Sciatic nerve (tissue), 2 donors: ENCODE measurements at regions of chr9 and their contacts with region 1.

Region 1: DNA sequence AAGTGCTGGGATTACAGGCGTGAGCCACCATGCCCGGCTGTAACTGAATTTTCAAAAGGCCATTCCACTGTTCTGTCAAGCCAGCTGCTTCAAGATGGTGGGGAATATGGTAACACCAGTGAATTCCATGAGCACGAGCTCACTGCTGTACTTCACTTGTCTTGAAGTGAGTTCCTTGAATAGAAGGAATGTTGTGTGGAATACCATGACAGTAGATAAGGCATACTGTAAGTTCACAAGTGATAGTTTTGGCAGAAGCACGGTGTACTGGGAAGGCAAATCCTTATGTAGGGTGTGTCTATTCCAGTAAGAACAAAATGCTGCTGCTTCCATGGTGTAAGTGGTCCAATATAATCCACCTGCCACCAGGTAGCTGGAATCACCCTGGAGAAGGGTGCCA is 6.6 kb upstream of the PRXL2C start:
- DNase-seq: no peak
- ATAC-seq: no peak

Region 2: DNA sequence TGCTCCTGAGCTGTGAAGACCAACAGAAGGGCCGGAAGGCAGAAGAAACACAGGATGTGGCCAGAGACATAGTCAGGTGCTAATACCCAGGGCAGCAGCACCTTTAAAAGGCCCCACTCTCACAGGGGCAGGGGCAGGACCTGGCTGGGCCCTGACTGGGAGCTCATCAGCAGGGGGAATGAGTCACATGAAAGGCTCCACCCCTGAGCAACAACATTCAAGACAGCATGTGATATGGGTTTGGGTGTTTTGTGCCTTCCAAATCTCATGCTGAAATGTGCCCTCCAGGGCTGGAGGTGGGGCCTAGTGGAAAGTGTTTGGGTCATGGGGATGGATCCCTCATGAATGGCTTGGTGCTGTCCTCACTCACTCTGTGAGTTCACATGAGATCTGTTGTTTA is 604.6 kb before region 1 on chr9:
- intact Hi-C with region 1: loop called (anchors 10 kb)
- DNase-seq: no peak
- ATAC-seq: no peak

Region 3: GRCh38 chr9:96327694-96328352 is 333.9 kb before region 1 on chr9:
- intact Hi-C with region 1: loop called (anchors 10 kb)
- DNase-seq: no peak
- ATAC-seq: peak; percentile 84

Region 4: GRCh38 chr9:96638606-96639364 is 22.9 kb before region 1 on chr9:
- intact Hi-C with region 1: no loop called
- DNase-seq: no peak
- ATAC-seq: no peak

Region 5: DNA sequence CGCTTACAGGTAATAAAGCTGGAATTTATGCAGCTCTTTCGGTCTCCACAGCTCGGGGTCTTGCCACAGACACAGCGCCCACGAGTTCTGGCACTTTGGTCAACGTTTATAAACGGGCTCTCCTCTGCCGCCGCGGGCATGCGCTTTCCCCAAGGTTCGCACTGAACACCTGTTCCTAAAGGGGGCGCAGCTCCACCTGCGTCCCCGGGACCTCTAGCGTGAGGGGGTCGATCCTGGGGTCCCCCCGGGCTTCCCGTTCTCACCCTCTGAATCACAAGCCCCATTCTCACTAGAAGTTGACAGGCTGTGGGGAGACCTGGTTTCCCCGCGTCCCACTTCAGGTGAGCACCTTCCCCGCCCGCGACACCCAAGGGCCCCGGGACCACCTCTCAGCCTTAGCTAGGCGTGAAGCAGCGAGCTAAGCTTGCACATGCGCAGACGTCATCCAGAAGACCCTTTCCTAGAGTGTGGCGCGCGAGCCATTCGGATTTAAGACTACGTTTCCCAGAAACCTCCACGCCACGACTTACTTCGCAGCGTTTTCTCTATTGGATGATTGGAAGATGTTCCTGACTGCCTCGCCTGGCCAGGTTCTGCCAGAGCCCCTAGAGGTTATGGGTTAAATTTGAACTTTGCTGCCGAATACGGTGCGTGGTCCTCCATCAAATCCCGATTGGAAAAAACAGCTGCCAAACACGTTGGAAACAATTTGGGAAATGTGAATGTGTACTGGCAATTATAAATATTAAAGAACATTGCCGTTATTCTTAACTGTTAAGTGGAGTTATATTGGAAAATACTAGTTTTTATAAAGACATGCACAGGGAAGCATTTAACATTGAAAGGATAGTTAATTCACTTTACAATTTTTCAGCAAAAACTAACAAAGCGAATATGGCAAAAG is 214.0 kb after region 1 on chr9:
- intact Hi-C with region 1: no loop called
- DNase-seq: no peak
- ATAC-seq: no peak